H1 (cell line): ENCODE measurements at regions of chr20 and their contacts with region 1.

Region 1: DNA sequence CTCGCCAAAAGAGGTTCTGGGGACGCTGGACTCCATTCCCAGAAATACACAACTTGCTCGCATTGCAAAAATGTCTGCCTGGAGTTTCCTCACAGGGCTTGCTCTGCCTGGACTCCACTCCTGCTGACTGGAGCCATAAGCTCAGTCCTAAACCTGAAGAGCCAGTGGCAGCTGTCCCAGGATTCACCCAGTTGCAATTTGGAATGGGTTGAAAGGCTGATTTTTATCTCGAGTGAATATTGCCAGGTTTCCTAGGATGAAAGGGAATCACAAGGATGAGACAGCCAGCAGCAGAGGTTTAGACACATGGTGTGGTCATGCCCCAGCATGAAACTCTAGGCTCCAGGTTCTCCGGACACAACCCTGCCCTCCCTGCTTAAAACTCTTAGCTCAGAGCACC is 223.3 kb downstream of the BMP7 start:
- DNase-seq: no peak
- H3K4me3 ChIP-seq: no peak overlapping the region
- H3K27ac ChIP-seq: no peak overlapping the region
- H3K4me1 ChIP-seq: peaks cover 0 to 3% (median 1%) of the 10 kb centered on the region in 4 experiments; a peak in 5 of 7 replicates
- H3K27me3 ChIP-seq: no peaks in the 10 kb centered on the region
- CTCF ChIP-seq: no peak
- EP300 ChIP-seq: no peak
- POLR2A ChIP-seq: no peak
- RAD21 ChIP-seq: no peak

Region 2: DNA sequence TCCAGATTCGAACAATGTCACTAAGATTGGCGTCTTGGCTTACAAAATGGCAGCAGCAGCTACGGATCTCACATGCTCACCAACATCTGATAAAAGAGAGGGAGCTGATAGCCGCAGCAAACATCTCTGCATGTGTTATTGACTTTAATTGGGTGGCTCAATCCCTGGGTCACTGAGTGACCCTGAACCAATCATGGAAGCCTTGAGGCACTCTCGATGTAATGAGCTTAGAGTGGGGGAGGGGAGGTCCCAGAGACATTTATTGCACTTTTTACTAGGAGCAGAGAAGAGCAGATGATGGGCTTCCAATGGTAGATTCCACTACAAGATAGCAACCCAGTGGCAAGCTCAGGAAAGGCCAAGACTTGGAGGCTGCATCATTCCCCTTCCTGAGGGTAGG is 15.3 kb before region 1 on chr20:
- CTCF ChIA-PET with region 1: interaction called, 10 read pairs
- POLR2A ChIA-PET with region 1: interaction called, 5 read pairs
- DNase-seq: no peak
- H3K4me3 ChIP-seq: no peak overlapping the region
- H3K27ac ChIP-seq: no peak overlapping the region
- H3K4me1 ChIP-seq: peaks cover 0 to 7% (median 2%) of the 10 kb centered on the region in 4 experiments; a peak in 5 of 7 replicates
- H3K27me3 ChIP-seq: peaks cover 0 to 2% (median 0%) of the 10 kb centered on the region in 4 experiments; a peak in 1 of 7 replicates
- CTCF ChIP-seq: no peak
- EP300 ChIP-seq: no peak
- POLR2A ChIP-seq: no peak
- RAD21 ChIP-seq: no peak

Region 3: GRCh38 chr20:57301026-57301425 is 257.9 kb after region 1 on chr20:
- CTCF ChIA-PET with region 1: no interaction called
- POLR2A ChIA-PET with region 1: no interaction called
- DNase-seq: no peak
- H3K4me3 ChIP-seq: no peak overlapping the region
- H3K27ac ChIP-seq: no peak overlapping the region
- H3K4me1 ChIP-seq: peaks cover 0 to 4% (median 0%) of the 10 kb centered on the region in 4 experiments; a peak in 1 of 7 replicates
- H3K27me3 ChIP-seq: no peaks in the 10 kb centered on the region
- CTCF ChIP-seq: no peak
- EP300 ChIP-seq: no peak
- POLR2A ChIP-seq: no peak
- RAD21 ChIP-seq: no peak